PC-9 (cell line): ENCODE measurements at regions of chr12 and their contacts with region 1.

Region 1: DNA sequence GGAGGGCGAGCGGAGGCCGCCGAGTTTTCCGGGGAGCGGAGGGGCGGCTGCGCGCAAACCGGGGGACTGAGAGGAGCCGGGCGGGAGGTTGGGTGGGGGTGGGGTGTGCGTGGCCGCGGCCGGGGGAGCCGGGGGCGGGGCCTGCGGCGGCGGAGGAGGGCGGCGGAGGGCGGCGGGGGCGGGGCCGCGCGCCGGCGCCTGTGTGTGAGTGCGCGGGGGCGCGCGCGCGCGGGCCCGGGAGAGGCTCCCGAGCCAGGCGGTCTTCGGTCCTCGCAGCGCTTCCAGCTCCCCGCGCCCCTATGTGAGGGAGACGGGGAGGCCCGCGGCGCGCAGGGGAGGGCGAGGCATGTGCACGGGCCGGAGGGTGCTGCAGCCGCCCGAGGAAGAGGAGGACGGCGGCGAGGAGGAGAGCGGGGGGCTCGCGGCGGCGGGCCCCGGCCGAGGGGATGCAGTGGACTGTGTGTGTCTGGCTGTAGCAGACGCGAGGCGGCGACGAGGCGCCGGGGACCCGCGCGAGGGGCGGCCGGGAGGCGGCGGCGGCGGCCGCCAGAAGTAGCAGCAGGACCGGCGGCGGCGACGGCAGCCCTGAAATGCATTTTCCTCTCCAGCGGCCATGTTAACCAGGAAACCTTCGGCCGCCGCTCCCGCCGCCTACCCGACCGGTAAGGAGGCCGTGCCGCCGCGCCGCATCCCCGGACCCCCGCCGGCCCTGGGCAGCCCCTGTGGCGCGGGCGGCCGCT is at the start of gene DYRK2:
- DNase-seq: peak; percentile 54 to 79
- H3K4me3 ChIP-seq: peak within 1 kb of the TSS; percentile 91
- H3K27ac ChIP-seq: peak within 1 kb of the TSS; percentile 98
- H3K4me1 ChIP-seq: peaks cover 61% of the 10 kb centered on the region
- H3K27me3 ChIP-seq: no peaks in the 10 kb centered on the region
- CTCF ChIP-seq: no peak
- total RNA-seq, gene DYRK2: 42.9 and 55.6 TPM in 2 replicates

Region 2: DNA sequence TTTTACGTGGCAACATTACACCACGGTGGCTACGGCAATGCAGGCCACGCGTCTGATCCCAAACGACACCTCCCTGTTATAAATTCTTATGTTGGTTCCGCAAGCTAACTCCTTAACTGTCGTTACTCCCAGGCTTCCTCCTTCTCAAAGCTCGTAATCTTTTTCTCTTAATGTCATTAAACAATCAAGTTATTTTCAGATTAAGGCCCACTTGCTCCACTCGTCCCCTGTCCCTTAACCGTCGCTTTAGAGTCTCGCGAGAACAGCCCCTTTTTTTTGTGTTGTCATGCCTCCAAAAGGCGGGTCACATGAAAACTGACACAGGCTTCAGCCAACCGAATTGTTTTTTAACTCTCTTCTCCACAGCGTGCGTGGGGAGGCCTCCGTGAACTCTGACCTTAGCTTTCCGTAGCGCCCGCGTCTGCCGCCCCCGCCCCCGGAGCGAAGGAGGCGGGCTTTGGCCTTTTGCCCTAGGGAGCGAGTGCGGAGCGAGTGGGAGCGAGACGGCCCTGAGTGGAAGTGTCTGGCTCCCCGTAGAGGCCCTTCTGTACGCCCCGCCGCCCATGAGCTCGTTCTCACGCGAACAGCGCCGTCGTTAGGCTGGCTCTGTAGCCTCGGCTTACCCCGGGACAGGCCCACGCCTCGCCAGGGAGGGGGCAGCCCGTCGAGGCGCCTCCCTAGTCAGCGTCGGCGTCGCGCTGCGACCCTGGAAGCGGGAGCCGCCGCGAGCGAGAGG is 379.6 kb before region 1 on chr12 and contains the start of gene CAND1:
- CTCF ChIA-PET with region 1: no interaction called
- POLR2A ChIA-PET with region 1: no interaction called
- intact Hi-C with region 1: loop called (anchors 5 kb)
- DNase-seq: peak; percentile 93 to 96
- H3K4me3 ChIP-seq: peak within 1 kb of the TSS; percentile 96
- H3K27ac ChIP-seq: peak within 1 kb of the TSS; percentile 93
- H3K4me1 ChIP-seq: peaks cover 31% of the 10 kb centered on the region
- H3K27me3 ChIP-seq: no peaks in the 10 kb centered on the region
- CTCF ChIP-seq: no peak
- total RNA-seq, gene CAND1: 163 and 169 TPM in 2 replicates

Region 3: DNA sequence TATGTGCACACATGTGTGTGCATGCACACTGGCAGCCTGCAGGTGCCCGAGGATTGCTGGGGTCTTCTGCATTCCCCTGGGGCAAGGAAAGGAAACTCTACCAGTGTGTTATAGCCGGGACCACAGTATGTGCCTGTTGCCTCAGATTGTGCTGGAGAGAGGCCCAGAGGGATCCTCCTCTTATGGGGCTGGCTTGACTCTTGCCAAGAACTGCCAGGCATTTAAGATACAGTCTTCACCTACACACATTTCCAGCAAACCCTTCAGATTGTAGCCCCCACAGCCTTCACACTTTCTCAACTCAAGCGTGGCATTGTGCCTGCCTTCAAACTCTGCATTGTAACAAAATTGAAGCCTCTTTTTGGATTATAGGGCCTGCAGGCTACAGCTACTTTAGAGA is 176.9 kb before region 1 on chr12:
- CTCF ChIA-PET with region 1: no interaction called
- POLR2A ChIA-PET with region 1: no interaction called
- intact Hi-C with region 1: no loop called
- DNase-seq: no peak
- H3K4me3 ChIP-seq: no peak overlapping the region
- H3K27ac ChIP-seq: no peak overlapping the region
- H3K4me1 ChIP-seq: peaks cover 27% of the 10 kb centered on the region
- H3K27me3 ChIP-seq: no peaks in the 10 kb centered on the region
- CTCF ChIP-seq: no peak

Region 4: DNA sequence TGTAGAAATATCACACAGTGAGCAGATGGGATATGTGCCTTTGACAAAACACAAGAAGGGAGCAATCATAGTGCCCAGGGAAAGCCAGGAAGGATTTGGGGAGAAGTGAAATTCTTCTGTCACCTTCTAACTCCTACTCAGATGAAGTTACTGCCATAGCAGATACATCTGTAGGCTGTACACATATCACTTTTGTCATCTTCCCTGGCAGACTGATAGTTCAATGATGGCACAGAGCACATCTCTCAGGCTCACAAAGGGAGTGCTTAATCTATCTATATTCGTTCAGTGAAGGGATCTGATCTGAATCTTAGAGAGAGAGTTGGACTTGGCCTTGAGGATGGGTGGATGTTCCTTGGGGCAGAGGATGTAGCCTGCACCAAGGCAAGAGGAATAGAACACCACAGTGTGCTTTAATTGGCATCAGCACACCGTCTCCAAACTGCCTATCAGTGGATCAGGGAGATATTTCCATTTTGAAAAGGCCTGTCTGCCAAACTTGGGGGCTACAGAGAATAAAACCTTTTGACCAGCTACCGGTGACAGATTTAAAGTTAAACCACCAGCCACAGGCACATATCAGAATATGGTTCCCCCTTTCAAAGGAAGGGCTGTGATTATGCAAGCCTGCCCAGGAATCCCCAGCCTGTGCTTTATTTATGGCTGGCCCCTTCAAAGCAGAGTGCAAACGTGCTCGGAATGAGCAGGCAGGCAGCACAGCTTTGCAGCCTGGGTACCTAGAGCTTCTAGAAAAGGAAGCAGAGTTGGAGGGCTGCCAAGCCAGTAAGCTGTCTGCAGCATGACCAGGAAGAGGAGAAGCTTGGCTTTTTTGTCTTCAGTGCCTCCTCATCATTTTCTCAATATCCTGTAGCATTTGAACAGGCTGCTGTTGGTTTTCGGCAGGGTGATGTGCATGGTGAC is 165.7 kb before region 1 on chr12:
- CTCF ChIA-PET with region 1: interaction called, 5 read pairs
- POLR2A ChIA-PET with region 1: interaction called, 10 read pairs
- intact Hi-C with region 1: loop called (anchors 1 kb)
- DNase-seq: peak; percentile 55 to 78
- H3K4me3 ChIP-seq: peak overlapping the region; percentile 19; the same call in 1 of the 2 replicates
- H3K27ac ChIP-seq: peak overlapping the region; percentile 92
- H3K4me1 ChIP-seq: peaks cover 64% of the 10 kb centered on the region
- H3K27me3 ChIP-seq: no peaks in the 10 kb centered on the region
- CTCF ChIP-seq: no peak

Region 5: DNA sequence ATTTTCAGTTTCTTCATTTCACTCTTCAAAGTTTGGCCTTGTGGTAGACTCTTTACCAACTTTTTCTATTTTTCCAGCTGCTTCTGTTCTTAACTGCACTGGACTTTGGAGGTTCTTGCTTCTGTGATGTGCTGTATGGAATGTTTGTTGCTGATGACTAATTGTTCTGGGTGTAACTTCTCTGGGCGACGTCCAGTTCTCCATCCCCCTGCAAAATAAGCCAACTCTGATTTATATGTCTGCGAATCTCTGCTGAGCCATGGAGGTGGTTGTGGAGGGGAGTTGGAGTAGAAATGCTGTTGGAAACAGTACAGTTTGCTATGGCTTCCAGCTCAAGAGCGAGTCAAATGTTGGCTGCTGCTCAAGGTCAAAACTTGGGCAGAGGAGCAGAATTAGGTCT is 114.0 kb before region 1 on chr12:
- CTCF ChIA-PET with region 1: no interaction called
- POLR2A ChIA-PET with region 1: no interaction called
- intact Hi-C with region 1: loop called (anchors 5 kb)
- DNase-seq: peak; percentile 21 to 44
- H3K4me3 ChIP-seq: no peak overlapping the region
- H3K27ac ChIP-seq: no peak overlapping the region
- H3K4me1 ChIP-seq: peaks cover 33% of the 10 kb centered on the region
- H3K27me3 ChIP-seq: no peaks in the 10 kb centered on the region
- CTCF ChIP-seq: no peak

Region 6: GRCh38 chr12:67578976-67579661 is 69.6 kb before region 1 on chr12:
- CTCF ChIA-PET with region 1: no interaction called
- POLR2A ChIA-PET with region 1: no interaction called
- intact Hi-C with region 1: no loop called
- DNase-seq: no peak
- H3K4me3 ChIP-seq: no peak overlapping the region
- H3K27ac ChIP-seq: no peak overlapping the region
- H3K4me1 ChIP-seq: 0 out of 2 replicates have a peak, but pooled peaks cover 11% of the 10 kb centered on the region
- H3K27me3 ChIP-seq: no peaks in the 10 kb centered on the region
- CTCF ChIP-seq: no peak

Region 7: GRCh38 chr12:67773896-67774295 is 125.2 kb after region 1 on chr12:
- CTCF ChIA-PET with region 1: no interaction called
- POLR2A ChIA-PET with region 1: interaction called, 10 read pairs
- intact Hi-C with region 1: no loop called
- DNase-seq: no peak
- H3K4me3 ChIP-seq: no peak overlapping the region
- H3K27ac ChIP-seq: peak overlapping the region; percentile 65
- H3K4me1 ChIP-seq: peaks cover 36% of the 10 kb centered on the region
- H3K27me3 ChIP-seq: no peaks in the 10 kb centered on the region
- CTCF ChIP-seq: no peak

Region 8: GRCh38 chr12:67794161-67794560 is 145.5 kb after region 1 on chr12:
- CTCF ChIA-PET with region 1: no interaction called
- POLR2A ChIA-PET with region 1: no interaction called
- intact Hi-C with region 1: no loop called
- DNase-seq: no peak
- H3K4me3 ChIP-seq: no peak overlapping the region
- H3K27ac ChIP-seq: no peak overlapping the region
- H3K4me1 ChIP-seq: peaks cover 11% of the 10 kb centered on the region
- H3K27me3 ChIP-seq: no peaks in the 10 kb centered on the region
- CTCF ChIP-seq: no peak

Region 9: DNA sequence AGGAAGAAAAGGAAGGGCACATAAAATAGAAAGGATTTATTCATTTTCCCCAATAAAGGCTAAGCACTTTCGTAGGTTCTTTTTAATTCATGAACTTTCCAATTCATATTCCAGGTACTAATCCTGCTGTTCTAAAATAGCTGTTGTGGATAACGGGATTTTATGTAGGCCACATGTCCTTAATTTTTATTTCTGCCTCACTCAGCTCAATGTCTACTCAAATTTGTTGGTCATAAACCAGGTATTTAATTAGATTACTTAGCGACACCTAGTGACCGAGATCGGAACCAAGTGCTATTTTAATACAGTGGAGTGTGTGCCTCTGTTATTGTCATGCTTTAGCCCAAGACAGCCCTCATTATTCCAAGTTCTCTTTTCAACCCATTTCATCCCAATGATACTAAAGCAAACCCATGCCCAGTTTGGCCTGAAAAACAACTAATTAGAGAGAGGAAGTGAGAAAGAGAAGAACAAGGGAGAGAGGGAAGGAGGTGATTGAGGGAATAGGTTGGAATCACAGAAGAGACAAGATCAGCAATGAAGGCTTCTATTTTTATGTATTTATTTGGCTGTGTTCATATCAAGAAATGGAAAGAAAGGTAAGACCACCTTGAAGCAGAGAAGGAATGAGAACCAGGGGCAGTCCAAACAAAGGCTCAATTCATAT is 294.7 kb after region 1 on chr12:
- CTCF ChIA-PET with region 1: interaction called, 4 read pairs
- POLR2A ChIA-PET with region 1: interaction called, 10 read pairs
- intact Hi-C with region 1: loop called (anchors 1 kb)
- DNase-seq: peak; percentile 50 to 52
- H3K4me3 ChIP-seq: no peak overlapping the region
- H3K27ac ChIP-seq: no peak overlapping the region
- H3K4me1 ChIP-seq: peaks cover 41% of the 10 kb centered on the region
- H3K27me3 ChIP-seq: no peaks in the 10 kb centered on the region
- CTCF ChIP-seq: peak; percentile 83